CD4-positive, alpha-beta T cell (primary cell): ENCODE measurements at regions of chr11 and their contacts with region 1.

Region 1: DNA sequence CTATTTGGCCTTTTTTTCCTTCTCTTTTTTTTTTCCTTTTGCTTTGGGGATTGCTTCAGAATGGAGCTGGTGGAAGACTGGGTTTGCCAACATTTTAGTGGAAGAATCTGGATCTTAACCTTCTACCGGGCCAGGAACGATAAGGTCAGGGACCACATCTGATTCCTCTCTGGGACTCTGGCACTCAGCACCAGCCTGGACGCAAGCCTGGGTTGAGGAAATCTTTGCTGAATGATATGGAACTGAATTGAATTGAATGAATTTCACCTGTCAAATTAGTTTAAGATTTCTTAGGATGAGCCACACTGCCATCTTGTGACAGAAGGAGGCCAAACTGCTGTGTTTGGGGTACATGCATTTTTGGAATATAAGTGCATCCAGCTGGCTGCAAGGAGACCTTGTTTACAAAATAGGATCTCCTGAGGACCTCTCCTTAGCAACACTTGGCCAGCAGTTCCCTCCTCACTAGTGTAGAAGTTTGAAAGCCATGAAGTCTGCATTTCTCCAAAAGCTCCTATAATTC is 30.4 kb downstream of the TPBGL start:
- DNase-seq: peak in 11 of 14 experiments; percentile 15 to 60 (median 31)
- ATAC-seq: no peak
- H3K4me3 ChIP-seq: no peak overlapping the region
- H3K4me3 Mint-ChIP-seq: no peak overlapping the region
- H3K27ac ChIP-seq: no peak overlapping the region
- H3K27ac Mint-ChIP-seq: peak overlapping the region; percentile 86
- H3K4me1 ChIP-seq: peaks cover 54% of the 10 kb centered on the region
- H3K4me1 Mint-ChIP-seq: peaks cover 43% of the 10 kb centered on the region
- H3K27me3 ChIP-seq: no peaks in the 10 kb centered on the region
- H3K27me3 Mint-ChIP-seq: no peaks in the 10 kb centered on the region
- CTCF ChIP-seq: peak; percentile 63

Region 2: DNA sequence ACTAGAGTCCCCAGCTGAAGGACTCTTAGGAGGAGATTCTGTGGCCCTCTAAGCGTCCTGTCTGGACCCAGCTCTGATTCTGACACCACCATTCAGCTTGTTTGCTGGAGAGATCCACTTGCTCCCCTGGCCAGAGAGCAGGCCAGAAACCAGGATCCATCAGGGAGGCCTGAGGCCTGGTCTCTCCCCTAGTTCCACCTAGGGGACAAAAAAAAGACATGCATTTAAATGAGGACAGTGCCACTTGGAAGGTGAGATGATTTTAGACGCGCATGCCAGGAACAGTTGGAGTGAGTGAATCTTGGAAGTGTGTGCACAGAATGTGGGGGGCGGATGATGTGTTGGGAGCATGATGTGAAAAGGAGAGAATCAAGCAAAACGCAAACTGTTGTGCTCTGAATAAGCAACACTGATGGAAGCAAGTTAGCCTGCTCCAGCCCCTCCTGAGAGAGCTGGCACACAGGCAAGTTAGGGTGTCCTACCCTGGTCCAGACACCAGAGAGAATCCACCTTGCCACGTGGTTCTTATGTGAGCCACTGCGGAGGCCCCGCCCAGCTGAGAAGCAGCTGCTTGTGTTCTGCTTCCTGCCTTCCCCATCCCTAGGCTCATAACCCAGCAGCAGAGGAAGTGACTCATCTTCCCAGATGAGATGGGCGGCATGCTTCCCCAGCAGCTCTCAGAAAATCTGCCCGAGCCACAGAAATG is 128.1 kb before region 1 on chr11:
- CTCF ChIA-PET with region 1: interaction called, 32 read pairs
- POLR2A ChIA-PET with region 1: interaction called, 31 read pairs
- intact Hi-C with region 1: loop called (anchors 1 kb)
- DNase-seq: peak; percentile 20 to 88 (median 70)
- ATAC-seq: peak; percentile 94
- H3K4me3 ChIP-seq: no peak overlapping the region
- H3K4me3 Mint-ChIP-seq: no peak overlapping the region
- H3K27ac ChIP-seq: peak overlapping the region; percentile 37 to 55
- H3K27ac Mint-ChIP-seq: peak overlapping the region; percentile 18
- H3K4me1 ChIP-seq: peaks cover 34% of the 10 kb centered on the region
- H3K4me1 Mint-ChIP-seq: peaks cover 43% of the 10 kb centered on the region
- H3K27me3 ChIP-seq: no peaks in the 10 kb centered on the region
- H3K27me3 Mint-ChIP-seq: no peaks in the 10 kb centered on the region
- CTCF ChIP-seq: no peak

Region 3: DNA sequence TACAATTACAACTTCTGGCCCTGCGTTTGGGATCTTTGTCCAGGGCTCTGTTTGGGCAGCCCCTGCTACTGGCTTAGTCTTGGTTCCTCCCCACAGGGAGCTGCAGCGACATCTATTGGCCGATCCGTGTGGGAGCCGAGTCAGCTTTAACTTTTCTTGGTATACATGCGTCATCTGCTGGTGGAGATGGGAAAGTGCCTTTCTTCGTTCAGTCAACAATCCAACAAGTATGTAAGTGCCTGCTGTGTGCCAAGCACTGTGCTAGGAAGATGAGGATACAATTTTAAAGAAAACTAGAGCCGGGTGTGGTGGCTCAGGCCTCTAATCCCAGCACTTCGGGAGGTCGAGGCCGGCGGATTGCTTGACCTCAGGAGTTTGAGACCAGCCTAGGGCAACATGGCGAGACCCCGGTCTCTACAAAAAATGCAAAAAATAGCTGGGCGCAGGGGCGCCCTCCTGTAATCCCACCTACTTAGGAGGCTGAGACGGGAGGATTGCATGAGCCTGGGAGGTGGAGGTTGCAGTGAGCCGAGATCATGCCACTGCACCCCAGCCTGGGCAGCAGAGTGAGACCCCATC is 22.2 kb before region 1 on chr11:
- CTCF ChIA-PET with region 1: interaction called, 40 read pairs
- POLR2A ChIA-PET with region 1: interaction called, 9 read pairs
- intact Hi-C with region 1: no loop called
- DNase-seq: peak; percentile 79 to 93 (median 84)
- ATAC-seq: peak; percentile 98
- H3K4me3 ChIP-seq: no peak overlapping the region
- H3K4me3 Mint-ChIP-seq: no peak overlapping the region
- H3K27ac ChIP-seq: no peak overlapping the region
- H3K27ac Mint-ChIP-seq: no peak overlapping the region
- H3K4me1 ChIP-seq: peaks cover 7% of the 10 kb centered on the region
- H3K4me1 Mint-ChIP-seq: no peaks in the 10 kb centered on the region
- H3K27me3 ChIP-seq: no peaks in the 10 kb centered on the region
- H3K27me3 Mint-ChIP-seq: peaks cover 14% of the 10 kb centered on the region
- CTCF ChIP-seq: peak; percentile 99

Region 4: DNA sequence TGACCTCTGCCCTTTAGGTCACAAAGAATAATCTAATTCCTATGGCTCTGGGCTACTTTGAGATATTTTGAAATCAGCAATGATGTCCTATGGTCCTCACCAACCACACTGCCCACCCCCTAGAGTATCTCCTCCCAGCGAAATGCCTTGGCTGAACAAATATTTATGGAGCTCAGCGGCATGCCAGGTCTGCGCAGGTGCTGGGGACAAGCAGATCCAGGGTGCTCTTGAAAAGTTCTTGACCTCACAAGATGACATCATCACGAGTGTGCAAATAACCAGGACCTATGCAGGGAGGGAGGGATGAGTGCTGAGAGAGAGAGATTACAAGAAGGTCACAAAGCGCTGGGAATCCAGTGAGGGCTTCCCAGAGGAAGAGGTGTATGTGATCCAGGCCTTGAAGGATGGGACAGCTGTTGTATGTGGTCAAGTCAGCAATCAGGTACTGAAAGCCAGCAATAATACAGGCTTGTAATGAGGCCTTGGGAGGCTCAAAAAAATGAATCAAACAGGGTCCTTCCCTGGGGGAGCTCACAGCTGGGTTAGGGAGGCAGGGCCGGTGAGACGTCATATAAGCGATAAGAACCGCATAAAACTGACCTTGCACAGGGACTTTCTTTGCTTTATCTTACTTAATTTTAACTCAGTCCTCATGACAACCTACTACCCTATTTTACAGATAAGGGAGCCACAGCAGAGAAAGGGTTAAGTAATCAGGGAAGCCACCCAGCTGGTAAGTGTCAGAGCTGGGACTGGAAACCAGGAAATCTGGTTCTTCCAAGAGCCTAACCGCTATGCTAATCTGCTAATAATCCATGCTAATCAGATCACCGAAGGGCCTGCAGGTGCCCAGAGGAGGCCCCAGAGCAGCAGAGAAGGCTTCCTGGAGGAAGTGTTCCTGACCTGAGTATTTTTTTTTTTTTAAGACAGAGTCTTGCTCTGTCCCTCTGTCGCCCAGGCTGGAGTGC is 72.2 kb after region 1 on chr11:
- CTCF ChIA-PET with region 1: no interaction called
- POLR2A ChIA-PET with region 1: interaction called, 33 read pairs
- intact Hi-C with region 1: no loop called
- DNase-seq: no peak
- ATAC-seq: no peak
- H3K4me3 ChIP-seq: no peak overlapping the region
- H3K4me3 Mint-ChIP-seq: no peak overlapping the region
- H3K27ac ChIP-seq: peak overlapping the region in 1 of 2 donors; percentile 34
- H3K27ac Mint-ChIP-seq: peak overlapping the region; percentile 88
- H3K4me1 ChIP-seq: peaks cover 99% of the 10 kb centered on the region
- H3K4me1 Mint-ChIP-seq: peaks cover 95% of the 10 kb centered on the region
- H3K27me3 ChIP-seq: no peaks in the 10 kb centered on the region
- H3K27me3 Mint-ChIP-seq: no peaks in the 10 kb centered on the region
- CTCF ChIP-seq: no peak

Region 5: DNA sequence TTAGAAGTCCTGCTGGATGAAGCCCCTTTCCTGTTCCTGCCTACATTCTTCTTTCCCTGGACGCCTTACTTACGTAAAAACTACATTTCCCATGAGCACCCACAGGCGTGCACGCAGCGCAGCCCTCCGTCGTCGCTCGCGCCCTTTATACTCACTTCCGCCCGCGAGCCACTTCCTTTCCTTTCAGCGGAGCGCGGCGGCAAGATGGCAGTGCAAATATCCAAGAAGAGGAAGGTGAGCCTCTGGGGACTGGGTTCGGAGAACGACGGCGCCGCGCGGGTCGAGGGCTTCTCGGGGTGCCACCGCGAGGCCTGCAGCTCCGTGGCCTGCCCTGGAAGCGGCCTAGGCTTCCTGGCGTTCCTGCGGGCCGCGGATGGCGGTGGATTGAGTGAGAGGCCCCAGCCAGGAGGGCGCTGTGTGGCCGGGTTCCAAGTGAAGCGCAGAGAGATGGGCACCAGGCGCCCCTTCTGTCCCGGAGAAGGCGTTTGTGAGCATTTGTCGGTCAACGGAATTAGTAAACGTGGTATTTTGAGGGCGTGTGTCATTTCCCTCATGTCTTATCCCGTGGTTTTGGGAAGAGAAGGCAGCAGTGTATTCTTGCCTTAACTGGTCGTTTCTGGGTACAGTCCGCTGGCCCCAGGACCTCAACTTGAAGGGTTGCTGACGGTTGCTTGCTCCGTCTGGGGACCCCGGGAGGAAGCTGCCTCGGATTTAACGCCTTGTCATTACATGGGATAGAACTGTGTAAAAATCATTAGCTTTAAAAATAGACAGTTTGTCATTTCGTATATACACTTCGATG is 128.6 kb after region 1 on chr11 and contains the start of gene RPS3:
- CTCF ChIA-PET with region 1: no interaction called
- POLR2A ChIA-PET with region 1: interaction called, 24 read pairs
- intact Hi-C with region 1: no loop called
- DNase-seq: peak; percentile 79 to 94 (median 84)
- ATAC-seq: peak; percentile 88
- H3K4me3 ChIP-seq: peak within 1 kb of the TSS; percentile 72
- H3K4me3 Mint-ChIP-seq: peak within 1 kb of the TSS; percentile 86
- H3K27ac ChIP-seq: peak within 1 kb of the TSS; percentile 86 to 88
- H3K27ac Mint-ChIP-seq: peak within 1 kb of the TSS; percentile 92
- H3K4me1 ChIP-seq: peaks cover 44% of the 10 kb centered on the region
- H3K4me1 Mint-ChIP-seq: peaks cover 54% of the 10 kb centered on the region
- H3K27me3 ChIP-seq: no peaks in the 10 kb centered on the region
- H3K27me3 Mint-ChIP-seq: no peaks in the 10 kb centered on the region
- CTCF ChIP-seq: peak; percentile 33
- total RNA-seq, gene RPS3: 4,753 to 4,828 TPM

Region 6: GRCh38 chr11:75532200-75533048 is 261.5 kb after region 1 on chr11:
- CTCF ChIA-PET with region 1: no interaction called
- POLR2A ChIA-PET with region 1: no interaction called
- intact Hi-C with region 1: loop called (anchors 5 to 10 kb)
- DNase-seq: peak; percentile 74 to 90 (median 82)
- ATAC-seq: peak; percentile 98
- H3K4me3 ChIP-seq: no peak overlapping the region
- H3K4me3 Mint-ChIP-seq: peak overlapping the region; percentile 26
- H3K27ac ChIP-seq: no peak overlapping the region
- H3K27ac Mint-ChIP-seq: no peak overlapping the region
- H3K4me1 ChIP-seq: peaks cover 29% of the 10 kb centered on the region
- H3K4me1 Mint-ChIP-seq: peaks cover 39% of the 10 kb centered on the region
- H3K27me3 ChIP-seq: no peaks in the 10 kb centered on the region
- H3K27me3 Mint-ChIP-seq: no peaks in the 10 kb centered on the region
- CTCF ChIP-seq: peak; percentile 96

Region 7: GRCh38 chr11:75615706-75616105 is 344.7 kb after region 1 on chr11:
- CTCF ChIA-PET with region 1: no interaction called
- POLR2A ChIA-PET with region 1: no interaction called
- intact Hi-C with region 1: no loop called
- DNase-seq: no peak
- ATAC-seq: no peak
- H3K4me3 ChIP-seq: no peak overlapping the region
- H3K4me3 Mint-ChIP-seq: no peak overlapping the region
- H3K27ac ChIP-seq: no peak overlapping the region
- H3K27ac Mint-ChIP-seq: no peak overlapping the region
- H3K4me1 ChIP-seq: no peaks in the 10 kb centered on the region
- H3K4me1 Mint-ChIP-seq: no peaks in the 10 kb centered on the region
- H3K27me3 ChIP-seq: no peaks in the 10 kb centered on the region
- H3K27me3 Mint-ChIP-seq: peaks cover 7% of the 10 kb centered on the region
- CTCF ChIP-seq: no peak

Region 8: GRCh38 chr11:76329084-76329984 is 1058.4 kb after region 1 on chr11:
- CTCF ChIA-PET with region 1: no interaction called
- POLR2A ChIA-PET with region 1: no interaction called
- intact Hi-C with region 1: no loop called
- DNase-seq: no peak
- ATAC-seq: no peak
- H3K4me3 ChIP-seq: no peak overlapping the region
- H3K4me3 Mint-ChIP-seq: no peak overlapping the region
- H3K27ac ChIP-seq: no peak overlapping the region
- H3K27ac Mint-ChIP-seq: no peak overlapping the region
- H3K4me1 ChIP-seq: no peaks in the 10 kb centered on the region
- H3K4me1 Mint-ChIP-seq: no peaks in the 10 kb centered on the region
- H3K27me3 ChIP-seq: no peaks in the 10 kb centered on the region
- H3K27me3 Mint-ChIP-seq: peaks cover 4% of the 10 kb centered on the region
- CTCF ChIP-seq: no peak